ENCODE measurements at regions of chr17 and their contacts with region 1.

Region 1: GRCh38 chr17:2624292-2624731 is 30.9 kb downstream of the PAFAH1B1 start:
- DNase-seq: no peak
- H3K4me3 ChIP-seq: no peak overlapping the region
- H3K27ac ChIP-seq: 0 out of 2 replicates have a peak overlapping the region, but pooled peaks have one; percentile 49
- H3K4me1 ChIP-seq: peaks cover 0 to 5% (median 3%) of the 10 kb centered on the region in 4 experiments; a peak in 2 of 7 replicates
- H3K27me3 ChIP-seq: no peaks in the 10 kb centered on the region
- CTCF ChIP-seq: no peak
- EP300 ChIP-seq: no peak
- POLR2A ChIP-seq: no peak
- RAD21 ChIP-seq: no peak

Region 2: GRCh38 chr17:2592971-2593820 is 31.1 kb before region 1 on chr17 and contains the start of gene PAFAH1B1:
- CTCF ChIA-PET with region 1: no interaction called
- POLR2A ChIA-PET with region 1: interaction called, 10 read pairs
- DNase-seq: peak; percentile 51 to 96
- H3K4me3 ChIP-seq: peak within 1 kb of the TSS; percentile 75 to 92 (median 88)
- H3K27ac ChIP-seq: peak within 1 kb of the TSS; percentile 86
- H3K4me1 ChIP-seq: no peaks in the 10 kb centered on the region; a peak in 1 of 7 replicates
- H3K27me3 ChIP-seq: no peaks in the 10 kb centered on the region
- CTCF ChIP-seq: no peak
- EP300 ChIP-seq: 0 out of 3 replicates have a peak, but pooled peaks of 1 of the 2 experiments have one; percentile 34
- POLR2A ChIP-seq: peak; percentile 55 to 83
- RAD21 ChIP-seq: 0 out of 4 replicates have a peak, but pooled peaks of 1 of the 2 experiments have one; percentile 6
- total RNA-seq, gene PAFAH1B1: 137 and 152 TPM in 2 replicates

Measured in H1 (cell line).